Activated naive CD4-positive, alpha-beta T cell treated with anti-CD3 and anti-CD28 coated beads for 36 hours (primary cell): ENCODE measurements at regions of chr6 and their contacts with region 1.

Region 1: GRCh38 chr6:147285087-147285855 is 81.1 kb downstream of the STXBP5 start:
- DNase-seq: no peak
- H3K4me3 Mint-ChIP-seq: no peak overlapping the region
- H3K27ac Mint-ChIP-seq: no peak overlapping the region
- H3K4me1 Mint-ChIP-seq: peaks cover 34% of the 10 kb centered on the region
- H3K27me3 Mint-ChIP-seq: no peaks in the 10 kb centered on the region

Region 2: GRCh38 chr6:146739696-146740095 is 545.6 kb before region 1 on chr6:
- CTCF ChIA-PET with region 1: no interaction called
- intact Hi-C with region 1: no loop called
- DNase-seq: no peak
- H3K4me3 Mint-ChIP-seq: no peak overlapping the region
- H3K27ac Mint-ChIP-seq: no peak overlapping the region
- H3K4me1 Mint-ChIP-seq: no peaks in the 10 kb centered on the region
- H3K27me3 Mint-ChIP-seq: no peaks in the 10 kb centered on the region

Region 3: GRCh38 chr6:146857180-146857979 is 427.9 kb before region 1 on chr6:
- CTCF ChIA-PET with region 1: interaction called, 5 read pairs
- intact Hi-C with region 1: loop called (anchors 1 kb)
- DNase-seq: peak; percentile 84
- H3K4me3 Mint-ChIP-seq: no peak overlapping the region
- H3K27ac Mint-ChIP-seq: no peak overlapping the region
- H3K4me1 Mint-ChIP-seq: peaks cover 21% of the 10 kb centered on the region
- H3K27me3 Mint-ChIP-seq: peaks cover 2% of the 10 kb centered on the region

Region 4: GRCh38 chr6:147016440-147016839 is 268.8 kb before region 1 on chr6:
- CTCF ChIA-PET with region 1: no interaction called
- intact Hi-C with region 1: loop called (anchors 5 kb)
- DNase-seq: peak; percentile 7
- H3K4me3 Mint-ChIP-seq: no peak overlapping the region
- H3K27ac Mint-ChIP-seq: peak overlapping the region; percentile 35
- H3K4me1 Mint-ChIP-seq: peaks cover 10% of the 10 kb centered on the region
- H3K27me3 Mint-ChIP-seq: no peaks in the 10 kb centered on the region

Region 5: DNA sequence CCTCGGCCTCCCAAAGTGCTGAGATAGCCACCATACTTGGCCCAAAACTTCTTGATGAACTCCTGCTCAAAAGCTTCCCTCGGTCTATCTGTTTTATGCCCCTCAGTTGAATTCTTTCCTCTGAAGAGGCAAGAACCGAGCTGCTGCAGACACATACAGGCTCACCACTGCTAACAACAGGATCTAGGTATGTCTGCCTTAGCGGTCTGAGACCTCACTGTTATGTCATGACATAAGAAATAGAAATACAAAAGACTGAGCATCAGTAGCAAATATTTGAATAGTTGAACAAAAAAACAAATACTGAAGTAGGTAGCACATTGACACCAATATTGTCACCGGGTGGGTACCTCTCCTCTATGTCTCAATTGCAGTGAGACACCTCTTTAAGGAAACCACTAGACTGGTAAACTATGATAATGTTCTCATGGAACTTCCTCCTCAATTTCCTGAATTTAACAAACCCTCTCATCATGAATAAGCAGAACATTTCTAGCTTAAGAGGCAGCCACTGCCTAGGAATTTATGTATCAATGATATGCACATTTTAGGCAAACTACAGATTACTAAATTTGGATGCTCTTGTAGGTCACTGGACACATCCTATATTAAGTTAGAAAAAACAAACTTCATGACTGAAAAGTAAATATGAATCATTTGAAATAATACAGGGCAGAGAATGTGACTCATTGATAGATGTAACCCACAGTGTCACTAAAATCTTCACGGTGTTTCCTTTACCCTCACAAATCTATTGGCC is 90.4 kb before region 1 on chr6:
- CTCF ChIA-PET with region 1: no interaction called
- intact Hi-C with region 1: loop called (anchors 1 kb)
- DNase-seq: no peak
- H3K4me3 Mint-ChIP-seq: peak overlapping the region; percentile 25
- H3K27ac Mint-ChIP-seq: peak overlapping the region; percentile 88
- H3K4me1 Mint-ChIP-seq: peaks cover 22% of the 10 kb centered on the region
- H3K27me3 Mint-ChIP-seq: no peaks in the 10 kb centered on the region

Region 6: DNA sequence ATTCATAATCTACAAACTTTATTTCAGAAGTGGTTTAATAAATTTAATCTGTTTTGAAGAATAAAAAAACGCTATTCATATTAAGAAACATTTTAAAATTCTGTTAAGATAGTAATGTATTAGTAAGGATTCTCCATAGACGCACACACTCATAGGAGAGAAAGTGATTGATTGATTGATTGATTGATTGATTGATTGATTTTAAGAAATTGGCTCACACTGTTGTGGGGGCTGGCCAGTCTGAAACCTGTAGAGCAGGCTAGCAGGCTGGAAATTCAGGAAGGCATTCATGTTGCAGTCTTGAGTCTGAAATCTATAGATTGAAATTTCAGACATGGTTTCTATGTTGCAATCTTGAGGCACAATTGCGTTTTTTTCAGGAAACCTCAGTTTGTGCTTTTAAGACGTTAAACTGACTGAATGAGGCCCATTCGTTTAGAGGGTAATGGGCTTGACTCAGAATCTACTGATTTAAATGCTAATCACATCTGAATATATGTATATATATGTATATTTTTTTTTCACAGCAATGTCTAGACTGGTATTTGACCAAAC is 25.2 kb after region 1 on chr6:
- CTCF ChIA-PET with region 1: no interaction called
- intact Hi-C with region 1: no loop called
- DNase-seq: no peak
- H3K4me3 Mint-ChIP-seq: no peak overlapping the region
- H3K27ac Mint-ChIP-seq: no peak overlapping the region
- H3K4me1 Mint-ChIP-seq: no peaks in the 10 kb centered on the region
- H3K27me3 Mint-ChIP-seq: no peaks in the 10 kb centered on the region

Region 7: GRCh38 chr6:147522597-147522996 is 237.3 kb after region 1 on chr6:
- CTCF ChIA-PET with region 1: no interaction called
- intact Hi-C with region 1: no loop called
- DNase-seq: no peak
- H3K4me3 Mint-ChIP-seq: no peak overlapping the region
- H3K27ac Mint-ChIP-seq: no peak overlapping the region
- H3K4me1 Mint-ChIP-seq: no peaks in the 10 kb centered on the region
- H3K27me3 Mint-ChIP-seq: peaks cover 19% of the 10 kb centered on the region

Region 8: DNA sequence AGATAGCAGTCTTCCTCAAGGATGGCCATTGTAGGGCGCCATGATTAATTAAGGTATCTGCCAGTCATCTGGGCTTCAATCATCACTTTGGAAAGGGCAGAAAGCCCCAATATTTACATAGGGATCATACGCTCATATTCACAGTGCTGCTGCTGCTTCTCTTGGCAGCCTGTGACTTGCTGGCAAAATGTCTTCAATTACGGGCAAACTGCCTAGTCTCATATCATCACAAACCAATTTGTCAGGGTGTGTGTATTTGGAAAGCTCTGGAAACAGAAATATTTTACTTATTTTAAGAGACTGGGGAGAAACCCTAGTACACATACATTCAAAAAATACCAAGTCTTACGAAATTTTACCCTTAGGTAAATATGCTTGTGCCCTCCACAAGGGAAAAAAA is 300.8 kb after region 1 on chr6:
- CTCF ChIA-PET with region 1: no interaction called
- intact Hi-C with region 1: no loop called
- DNase-seq: no peak
- H3K4me3 Mint-ChIP-seq: no peak overlapping the region
- H3K27ac Mint-ChIP-seq: no peak overlapping the region
- H3K4me1 Mint-ChIP-seq: no peaks in the 10 kb centered on the region
- H3K27me3 Mint-ChIP-seq: peaks cover 2% of the 10 kb centered on the region